ENCODE measurements at regions of chr12 and their contacts with region 1.

Region 1: DNA sequence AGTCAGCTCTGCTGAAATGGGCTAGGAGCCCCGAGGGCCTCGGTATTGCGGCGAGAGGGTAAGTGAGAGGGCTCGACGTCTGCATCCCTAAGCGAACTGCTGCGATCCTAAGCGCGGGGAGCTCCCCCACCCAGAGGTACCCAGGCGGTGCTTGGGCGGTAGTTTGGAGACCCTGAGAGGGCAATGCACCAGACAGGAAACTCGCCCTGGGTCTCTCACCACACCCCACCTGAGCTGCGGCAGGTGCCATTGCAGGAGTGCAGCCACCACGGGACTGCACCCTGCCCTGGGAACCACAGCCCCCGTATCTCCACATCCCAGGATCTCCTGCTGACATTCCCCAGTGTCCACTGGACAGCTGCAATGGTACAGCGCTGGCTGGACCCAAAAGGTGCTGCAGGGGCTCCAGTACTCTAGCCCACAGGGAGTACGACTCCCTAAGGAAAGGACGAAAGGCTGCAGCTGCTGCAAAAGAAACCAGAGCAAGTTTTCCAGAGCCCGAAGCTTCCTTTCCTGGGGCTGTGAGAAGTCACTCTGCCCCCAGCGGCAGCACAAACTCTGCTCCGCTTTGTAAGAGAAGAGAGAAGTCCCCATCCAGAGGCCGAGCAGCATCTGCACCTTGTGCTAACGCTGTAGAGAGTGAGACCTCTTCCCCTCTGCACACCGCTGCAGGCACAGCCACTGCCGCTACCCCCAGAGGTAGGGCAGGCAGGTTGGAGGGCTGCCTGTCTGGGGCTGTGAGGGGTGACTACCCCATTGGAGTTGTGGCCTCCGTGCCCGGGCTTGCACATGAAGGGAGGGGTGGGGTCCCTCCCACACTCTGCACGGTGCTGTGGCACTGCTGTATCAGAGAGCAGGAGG is 31.1 kb upstream of the MON2 start:
- DNase-seq: peak; percentile 57
- H3K4me3 Mint-ChIP-seq: peak overlapping the region; percentile 72
- H3K27ac Mint-ChIP-seq: no peak overlapping the region
- H3K4me1 Mint-ChIP-seq: peaks cover 9% of the 10 kb centered on the region
- H3K27me3 Mint-ChIP-seq: peaks cover 15% of the 10 kb centered on the region

Region 2: DNA sequence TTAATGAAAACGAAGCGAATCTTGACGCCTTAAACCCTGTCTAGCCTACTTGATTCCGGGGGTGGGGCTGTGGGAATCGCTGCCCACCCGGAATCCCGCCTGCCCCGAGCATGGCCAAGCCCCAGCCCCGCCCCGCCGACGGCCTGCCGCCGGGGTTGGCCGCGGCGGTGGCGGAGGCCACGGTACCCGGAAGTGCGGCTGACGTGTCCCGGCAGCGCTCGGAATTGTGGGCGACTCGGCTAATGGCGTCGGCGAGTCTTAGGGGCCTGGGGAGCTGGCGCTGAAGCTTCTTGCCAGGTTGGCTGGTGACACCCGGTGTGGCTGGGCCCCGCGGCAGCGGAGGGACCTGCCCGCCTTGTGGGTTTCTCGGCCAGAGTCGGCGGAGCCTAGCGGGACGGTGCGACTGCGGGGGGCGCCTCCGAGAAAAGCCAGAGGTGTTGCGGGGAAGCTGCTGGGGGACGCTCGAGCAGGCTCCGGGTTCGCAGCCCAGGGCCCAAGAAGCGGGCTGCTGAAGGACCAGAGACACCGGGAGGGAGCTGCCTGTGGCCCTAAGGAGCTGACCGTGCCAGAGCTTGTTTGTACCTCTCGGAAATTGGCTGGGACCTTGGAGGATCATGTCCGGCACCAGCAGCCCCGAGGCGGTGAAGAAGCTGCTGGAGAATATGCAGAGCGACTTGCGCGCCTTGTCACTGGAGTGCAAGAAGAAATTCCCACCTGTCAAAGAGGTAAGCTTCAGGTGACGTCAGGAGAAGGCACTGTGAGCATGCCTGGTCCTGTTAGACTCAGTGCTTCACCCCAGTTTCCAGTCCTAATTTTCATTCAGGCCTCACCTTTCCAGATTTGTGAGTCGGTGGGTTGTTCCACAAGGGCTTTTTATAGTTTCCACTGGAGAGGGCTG is 31.3 kb after region 1 on chr12 and contains the start of gene MON2:
- CTCF ChIA-PET with region 1: interaction called, 34 read pairs
- POLR2A ChIA-PET with region 1: no interaction called
- intact Hi-C with region 1: loop called (anchors 1 kb)
- DNase-seq: peak; percentile 90
- H3K4me3 Mint-ChIP-seq: peak within 1 kb of the TSS; percentile 93
- H3K27ac Mint-ChIP-seq: peak within 1 kb of the TSS; percentile 88
- H3K4me1 Mint-ChIP-seq: peaks cover 22% of the 10 kb centered on the region
- H3K27me3 Mint-ChIP-seq: no peaks in the 10 kb centered on the region
- total RNA-seq, gene MON2: 29.2 to 35.1 TPM

Region 3: DNA sequence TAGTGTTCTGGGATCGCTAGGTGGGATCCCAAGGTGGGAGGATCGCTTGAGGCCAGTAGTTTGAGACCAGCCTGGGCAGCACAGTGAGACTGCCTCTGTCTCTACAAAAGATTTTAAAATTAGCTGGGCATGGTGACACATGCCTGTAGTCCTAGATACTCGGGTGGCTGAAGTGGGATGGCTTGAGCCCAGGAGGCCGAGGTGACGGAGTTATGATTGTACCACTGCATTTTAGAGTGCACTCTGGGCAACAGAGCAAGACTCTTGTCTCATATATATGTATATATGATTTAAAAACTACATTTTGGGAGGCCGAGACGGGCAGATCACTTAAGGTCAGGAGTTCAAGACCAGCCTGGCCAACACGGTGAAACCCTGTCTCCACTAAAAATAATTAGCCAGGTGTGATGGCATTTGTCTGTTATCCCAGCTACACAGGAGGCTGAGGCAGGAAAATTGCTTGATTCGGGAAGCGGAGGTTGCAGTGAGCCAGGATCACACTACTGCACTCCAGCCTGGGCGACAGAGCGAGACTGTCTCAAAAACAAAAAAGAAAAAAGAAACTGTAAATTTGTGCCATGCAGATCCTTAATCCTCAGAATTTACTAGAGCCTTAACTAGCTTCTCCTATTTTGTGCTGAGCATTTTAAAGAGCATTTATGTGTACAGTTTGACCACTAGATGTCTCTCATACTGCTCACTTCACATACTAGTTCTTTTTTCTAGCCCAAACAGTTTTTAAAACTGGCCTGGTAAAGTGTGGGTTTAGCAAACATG is 145.9 kb after region 1 on chr12:
- CTCF ChIA-PET with region 1: interaction called, 13 read pairs
- POLR2A ChIA-PET with region 1: no interaction called
- intact Hi-C with region 1: loop called (anchors 5 kb)
- DNase-seq: no peak
- H3K4me3 Mint-ChIP-seq: no peak overlapping the region
- H3K27ac Mint-ChIP-seq: no peak overlapping the region
- H3K4me1 Mint-ChIP-seq: no peaks in the 10 kb centered on the region
- H3K27me3 Mint-ChIP-seq: no peaks in the 10 kb centered on the region

Region 4: DNA sequence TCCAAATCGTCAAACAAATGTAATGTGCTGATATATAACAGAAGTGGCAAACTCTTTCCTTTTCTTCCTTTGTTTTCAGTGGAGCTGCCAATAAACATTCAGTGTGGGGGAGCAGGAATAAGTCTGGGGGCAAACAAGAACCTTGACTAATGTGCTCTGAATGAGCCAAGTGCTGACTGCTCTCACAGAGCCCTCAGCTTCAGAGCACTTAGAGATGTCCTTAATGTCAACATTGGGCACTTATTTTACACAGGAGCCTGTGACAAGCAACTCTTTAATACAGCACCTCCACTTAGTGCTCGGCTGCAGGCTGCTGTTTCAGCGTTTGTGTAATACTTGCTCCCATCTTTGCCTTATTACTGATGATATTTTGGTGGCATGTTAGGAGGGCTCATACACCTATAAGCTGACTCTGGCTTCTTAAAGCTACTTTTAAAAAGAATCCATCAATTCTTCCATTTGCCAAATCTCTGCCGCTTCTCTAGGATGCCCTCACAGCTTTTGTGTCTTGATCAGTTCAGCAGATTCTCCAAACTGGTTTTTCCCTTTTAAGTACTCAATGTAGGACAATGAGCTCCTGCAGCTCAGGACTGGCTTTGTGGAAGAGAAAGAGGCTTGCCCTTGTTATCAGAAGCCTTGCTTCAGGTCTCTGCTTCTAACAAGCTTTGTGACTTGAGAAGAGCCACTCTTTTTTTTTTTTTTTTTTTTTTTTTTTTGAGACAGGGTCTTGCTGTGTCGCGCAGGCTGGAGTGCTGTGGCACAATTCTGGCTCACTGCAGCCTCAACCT is 237.7 kb after region 1 on chr12:
- CTCF ChIA-PET with region 1: no interaction called
- POLR2A ChIA-PET with region 1: no interaction called
- intact Hi-C with region 1: no loop called
- DNase-seq: no peak
- H3K4me3 Mint-ChIP-seq: no peak overlapping the region
- H3K27ac Mint-ChIP-seq: no peak overlapping the region
- H3K4me1 Mint-ChIP-seq: no peaks in the 10 kb centered on the region
- H3K27me3 Mint-ChIP-seq: peaks cover 2% of the 10 kb centered on the region

Region 5: GRCh38 chr12:62793256-62794217 is 358.0 kb after region 1 on chr12:
- CTCF ChIA-PET with region 1: interaction called, 158 read pairs
- POLR2A ChIA-PET with region 1: no interaction called
- intact Hi-C with region 1: loop called (anchors 1 kb)
- DNase-seq: peak; percentile 82
- H3K4me3 Mint-ChIP-seq: no peak overlapping the region
- H3K27ac Mint-ChIP-seq: no peak overlapping the region
- H3K4me1 Mint-ChIP-seq: no peaks in the 10 kb centered on the region
- H3K27me3 Mint-ChIP-seq: peaks cover 4% of the 10 kb centered on the region

Region 6: GRCh38 chr12:62813031-62813829 is 377.7 kb after region 1 on chr12:
- CTCF ChIA-PET with region 1: interaction called, 10 read pairs
- POLR2A ChIA-PET with region 1: no interaction called
- intact Hi-C with region 1: loop called (anchors 5 kb)
- DNase-seq: peak; percentile 53
- H3K4me3 Mint-ChIP-seq: no peak overlapping the region
- H3K27ac Mint-ChIP-seq: no peak overlapping the region
- H3K4me1 Mint-ChIP-seq: peaks cover 11% of the 10 kb centered on the region
- H3K27me3 Mint-ChIP-seq: peaks cover 17% of the 10 kb centered on the region